ENCODE measurements at regions of chr10 and their contacts with region 1.

Region 1: GRCh38 chr10:16867556-16867955 is 50.3 kb upstream of the RSU1 start:
- DNase-seq: peak in 1 of 2 experiments; percentile 21
- H3K4me3 ChIP-seq: peak overlapping the region in 1 of 4 experiments; percentile 44; a peak in 2 of 8 replicates
- H3K27ac ChIP-seq: no peak overlapping the region
- H3K4me1 ChIP-seq: peaks cover 4 to 21% (median 12%) of the 10 kb centered on the region in 4 experiments; a peak in 5 of 7 replicates
- H3K27me3 ChIP-seq: no peaks in the 10 kb centered on the region
- CTCF ChIP-seq: no peak
- EP300 ChIP-seq: no peak
- POLR2A ChIP-seq: no peak
- RAD21 ChIP-seq: no peak

Region 2: DNA sequence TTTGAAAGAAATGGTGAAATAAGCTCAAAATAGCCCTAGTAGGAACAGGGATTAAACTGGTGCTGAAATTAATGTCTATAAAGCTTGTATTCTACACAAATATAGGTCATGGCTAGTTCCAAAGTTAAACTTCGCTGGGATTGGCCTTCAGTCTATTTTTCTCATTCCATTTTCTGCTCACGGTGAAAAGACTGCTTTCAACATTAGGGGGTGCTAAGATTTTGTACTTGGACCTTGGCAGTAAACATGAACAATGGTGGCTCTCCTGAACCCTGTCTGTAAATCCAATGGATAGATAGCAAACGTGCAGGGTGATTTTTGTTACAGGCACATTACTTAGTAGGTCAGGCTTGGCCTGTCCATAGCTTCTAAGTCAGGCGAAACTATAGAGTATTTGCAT is 14.4 kb before region 1 on chr10:
- CTCF ChIA-PET with region 1: interaction called, 12 read pairs
- POLR2A ChIA-PET with region 1: no interaction called
- DNase-seq: no peak
- H3K4me3 ChIP-seq: no peak overlapping the region
- H3K27ac ChIP-seq: no peak overlapping the region
- H3K4me1 ChIP-seq: peaks cover 0 to 3% (median 0%) of the 10 kb centered on the region in 4 experiments; a peak in 2 of 7 replicates
- H3K27me3 ChIP-seq: no peaks in the 10 kb centered on the region
- CTCF ChIP-seq: peak in 2 of 3 experiments; percentile 25 to 42; a peak in 2 of 4 replicates
- EP300 ChIP-seq: no peak
- POLR2A ChIP-seq: no peak
- RAD21 ChIP-seq: peak; percentile 70 to 73

Region 3: GRCh38 chr10:16952610-16953009 is 85.1 kb after region 1 on chr10:
- CTCF ChIA-PET with region 1: no interaction called
- POLR2A ChIA-PET with region 1: no interaction called
- DNase-seq: no peak
- H3K4me3 ChIP-seq: no peak overlapping the region
- H3K27ac ChIP-seq: no peak overlapping the region
- H3K4me1 ChIP-seq: peaks cover 2 to 5% (median 3%) of the 10 kb centered on the region in 4 experiments; a peak in 4 of 7 replicates
- H3K27me3 ChIP-seq: no peaks in the 10 kb centered on the region
- CTCF ChIP-seq: peak in 2 of 3 experiments; percentile 21; a peak in 2 of 4 replicates
- EP300 ChIP-seq: no peak
- POLR2A ChIP-seq: no peak
- RAD21 ChIP-seq: peak; percentile 34 to 44